GM12878 (cell line): ENCODE measurements at regions of chr15 and their contacts with region 1.

Region 1: DNA sequence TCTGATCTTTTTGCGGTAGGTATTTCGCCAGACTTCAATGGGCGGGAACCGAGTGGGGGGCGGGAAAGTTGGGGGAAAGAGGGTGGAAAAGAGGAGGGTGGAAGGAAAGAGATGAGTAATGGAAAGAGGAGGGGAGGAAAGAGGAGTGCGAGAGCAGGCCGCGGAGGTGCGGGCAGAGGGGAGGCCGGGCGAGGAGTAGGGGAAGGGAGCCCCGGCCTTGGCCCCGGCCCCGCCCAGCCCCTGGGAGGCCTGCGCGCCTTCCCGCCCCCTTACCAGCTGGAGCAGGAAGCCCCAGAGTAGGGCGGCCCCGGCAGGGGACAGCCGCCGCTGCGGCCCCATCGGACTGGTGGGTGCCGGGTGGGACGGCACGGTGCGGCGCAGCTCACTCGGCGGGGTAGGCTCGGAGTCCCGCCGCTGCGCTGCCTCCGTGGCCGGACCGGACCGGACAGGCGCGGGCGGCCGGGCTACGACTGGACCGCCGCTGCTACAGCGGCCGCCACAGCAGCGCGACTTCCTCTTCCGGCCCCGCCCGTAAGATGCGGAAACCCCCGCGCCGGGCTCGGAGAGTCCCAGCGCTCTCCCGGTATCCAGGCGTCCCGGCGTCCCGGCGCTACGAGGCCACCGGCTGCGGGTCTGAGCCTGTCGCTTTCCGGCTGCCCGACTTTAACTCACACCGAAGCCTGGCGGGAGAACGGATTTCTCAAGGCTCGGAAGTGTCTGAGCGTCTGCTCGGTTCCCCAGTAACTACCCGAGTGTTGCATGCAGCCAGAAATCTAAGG is at the start of gene SPPL2A:
- DNase-seq: no peak
- ATAC-seq: peak; percentile 96
- H3K4me3 ChIP-seq: peak within 1 kb of the TSS; percentile 88
- H3K27ac ChIP-seq: peak within 1 kb of the TSS; percentile 93
- H3K4me1 ChIP-seq: peaks cover 10% of the 10 kb centered on the region
- H3K27me3 ChIP-seq: no peaks in the 10 kb centered on the region
- CTCF ChIP-seq: no peak
- EP300 ChIP-seq: no peak
- POLR2A ChIP-seq: peak; percentile 94
- RAD21 ChIP-seq: no peak
- polyA plus RNA-seq, gene SPPL2A: 11.3 to 24.2 TPM

Region 2: DNA sequence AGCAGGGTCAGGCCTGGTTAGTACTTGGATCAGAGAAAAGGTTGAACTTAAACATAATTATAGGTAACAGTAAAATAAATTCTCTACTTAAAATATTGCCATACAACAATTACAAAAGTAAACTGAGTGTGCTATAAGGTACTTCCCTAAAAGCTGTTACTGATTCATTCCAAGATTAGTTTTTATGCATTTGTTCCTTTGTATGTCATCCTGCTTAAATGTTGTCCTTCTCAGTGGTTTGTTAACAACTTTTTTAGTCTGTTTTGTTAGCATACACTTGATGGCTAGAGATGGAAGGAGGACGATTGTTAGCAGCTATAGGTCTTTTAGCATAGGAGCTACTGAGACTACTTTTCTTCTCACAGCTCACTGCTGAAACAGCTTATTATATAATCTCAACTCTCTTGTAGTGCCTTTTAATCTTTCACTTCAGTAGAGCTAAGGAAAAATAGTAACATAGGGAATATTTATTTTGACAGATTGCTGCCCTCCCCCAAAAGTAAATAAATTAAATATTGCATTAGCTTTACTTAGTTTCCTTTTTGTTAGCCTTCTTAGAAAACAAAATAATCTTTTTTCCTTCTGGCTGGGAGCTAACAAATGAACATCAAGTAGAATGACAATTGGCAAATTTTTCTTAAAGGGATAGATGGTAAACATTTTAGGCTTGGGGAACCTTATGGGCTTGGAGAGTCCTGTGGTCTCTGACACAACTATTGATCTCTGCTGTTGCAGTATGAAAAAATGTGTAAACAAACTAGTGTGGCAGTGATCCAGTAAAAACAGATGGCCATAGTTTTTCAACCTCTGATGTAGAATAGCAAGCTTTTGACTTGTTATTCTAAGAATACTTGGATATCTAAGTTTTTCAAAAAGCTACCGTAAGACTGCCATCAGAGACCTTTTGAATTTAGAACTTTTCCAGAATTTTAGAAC is 301.7 kb before region 1 on chr15:
- CTCF ChIA-PET with region 1: no interaction called
- POLR2A ChIA-PET with region 1: no interaction called
- RAD21 ChIA-PET with region 1: no interaction called
- SMC1A ChIA-PET with region 1: no interaction called
- in situ Hi-C with region 1: no loop called
- intact Hi-C with region 1: no loop called
- DNase-seq: no peak
- ATAC-seq: peak; percentile 38
- H3K4me3 ChIP-seq: no peak overlapping the region
- H3K27ac ChIP-seq: peak overlapping the region; percentile 2; the same call in 1 of the 2 replicates
- H3K4me1 ChIP-seq: peaks cover 13% of the 10 kb centered on the region
- H3K27me3 ChIP-seq: no peaks in the 10 kb centered on the region
- CTCF ChIP-seq: no peak
- EP300 ChIP-seq: no peak
- POLR2A ChIP-seq: no peak
- RAD21 ChIP-seq: no peak

Region 3: GRCh38 chr15:50686468-50687301 is 78.7 kb before region 1 on chr15 and contains the start of gene TRPM7:
- CTCF ChIA-PET with region 1: no interaction called
- POLR2A ChIA-PET with region 1: interaction called, 3 read pairs
- RAD21 ChIA-PET with region 1: no interaction called
- SMC1A ChIA-PET with region 1: interaction called, 4 read pairs
- in situ Hi-C with region 1: no loop called
- intact Hi-C with region 1: loop called (anchors 2 kb)
- DNase-seq: peak; percentile 56
- ATAC-seq: peak; percentile 87
- H3K4me3 ChIP-seq: peak within 1 kb of the TSS; percentile 91
- H3K27ac ChIP-seq: peak within 1 kb of the TSS; percentile 86
- H3K4me1 ChIP-seq: no peaks in the 10 kb centered on the region; the same call in none of the 2 replicates
- H3K27me3 ChIP-seq: no peaks in the 10 kb centered on the region
- CTCF ChIP-seq: no peak
- EP300 ChIP-seq: no peak
- POLR2A ChIP-seq: peak; percentile 95
- RAD21 ChIP-seq: no peak
- polyA plus RNA-seq, gene TRPM7: 4.5 to 9.9 TPM

Region 4: GRCh38 chr15:50753463-50753862 is 11.9 kb before region 1 on chr15:
- CTCF ChIA-PET with region 1: interaction called, 9 read pairs
- POLR2A ChIA-PET with region 1: no interaction called
- RAD21 ChIA-PET with region 1: interaction called, 3 read pairs
- SMC1A ChIA-PET with region 1: interaction called, 16 read pairs
- in situ Hi-C with region 1: no loop called
- intact Hi-C with region 1: no loop called
- DNase-seq: no peak
- ATAC-seq: no peak
- H3K4me3 ChIP-seq: no peak overlapping the region
- H3K27ac ChIP-seq: no peak overlapping the region
- H3K4me1 ChIP-seq: no peaks in the 10 kb centered on the region
- H3K27me3 ChIP-seq: no peaks in the 10 kb centered on the region
- CTCF ChIP-seq: no peak
- EP300 ChIP-seq: no peak
- POLR2A ChIP-seq: no peak
- RAD21 ChIP-seq: no peak

Region 5: GRCh38 chr15:50883903-50884302 is 118.5 kb after region 1 on chr15:
- CTCF ChIA-PET with region 1: interaction called, 5 read pairs
- POLR2A ChIA-PET with region 1: interaction called, 8 read pairs
- RAD21 ChIA-PET with region 1: interaction called, 7 read pairs
- SMC1A ChIA-PET with region 1: interaction called, 17 read pairs
- in situ Hi-C with region 1: no loop called
- intact Hi-C with region 1: loop called (anchors 2 kb)
- DNase-seq: peak; percentile 55
- ATAC-seq: no peak
- H3K4me3 ChIP-seq: no peak overlapping the region
- H3K27ac ChIP-seq: peak overlapping the region; percentile 4; the same call in 1 of the 2 replicates
- H3K4me1 ChIP-seq: peaks cover 56% of the 10 kb centered on the region
- H3K27me3 ChIP-seq: no peaks in the 10 kb centered on the region
- CTCF ChIP-seq: no peak
- EP300 ChIP-seq: no peak
- POLR2A ChIP-seq: no peak
- RAD21 ChIP-seq: no peak